ENCODE measurements at regions of chr3 and their contacts with region 1.

Region 1: DNA sequence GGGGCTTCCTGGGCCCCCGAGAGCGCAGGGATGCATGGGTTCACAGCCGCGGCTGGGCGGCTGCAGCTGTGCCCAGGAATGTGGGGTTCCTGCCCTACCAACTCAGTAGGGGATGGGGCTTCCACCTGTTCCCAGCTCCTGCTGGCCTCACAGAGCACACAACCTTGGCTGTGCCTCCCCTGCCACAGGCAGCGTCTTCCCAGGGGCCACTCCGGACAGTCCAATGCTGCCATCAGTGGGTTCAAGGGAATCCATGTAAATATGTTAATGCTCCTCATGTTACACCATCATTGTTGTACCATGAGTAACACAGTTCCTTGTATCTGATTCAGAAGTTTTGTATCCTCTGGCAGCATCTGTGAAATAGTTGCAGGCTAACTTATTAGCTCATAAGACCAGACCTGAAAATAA is 12.1 kb upstream of the SIAH2 start:
- DNase-seq: no peak
- H3K4me3 Mint-ChIP-seq: no peak overlapping the region
- H3K27ac Mint-ChIP-seq: no peak overlapping the region
- H3K4me1 Mint-ChIP-seq: no peaks in the 10 kb centered on the region
- H3K27me3 Mint-ChIP-seq: no peaks in the 10 kb centered on the region

Region 2: DNA sequence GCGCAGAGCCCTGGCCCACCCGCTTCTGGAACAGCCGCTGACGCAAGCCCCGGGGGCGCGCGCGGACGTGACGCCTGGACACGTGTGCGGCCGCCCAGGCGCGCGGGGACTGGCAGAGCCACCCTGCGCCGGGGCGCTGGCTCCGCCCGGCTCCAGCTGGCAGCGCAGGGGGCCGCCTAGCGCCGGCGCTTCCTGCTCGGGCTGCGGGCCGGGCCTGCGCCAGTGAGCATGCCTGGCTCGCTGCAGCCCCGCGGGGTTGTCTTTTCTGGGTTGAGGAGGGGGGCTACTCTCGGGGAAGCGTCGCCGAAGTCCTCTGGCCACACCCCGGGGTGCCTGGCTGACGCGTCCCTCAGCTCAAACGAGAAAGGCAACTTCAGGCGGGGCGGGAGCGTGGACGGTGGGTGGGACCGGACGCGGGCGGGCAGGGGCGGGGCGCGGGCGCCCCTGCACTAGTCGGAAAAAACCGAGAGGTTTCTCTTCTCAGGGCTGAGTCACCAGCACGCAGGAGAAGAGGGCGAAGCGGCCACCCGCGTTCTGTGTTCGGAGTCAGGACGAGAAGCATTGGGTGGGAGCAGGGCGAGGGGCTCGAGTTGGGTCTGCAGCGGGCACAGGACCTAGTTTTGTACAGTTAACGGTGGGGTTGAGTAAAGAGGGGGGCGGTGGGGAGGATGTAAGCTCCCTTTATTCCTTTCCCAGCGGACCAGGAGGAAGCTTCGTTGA is 11.8 kb before region 1 on chr3 and contains the start of gene SIAH2:
- CTCF ChIA-PET with region 1: interaction called, 61 read pairs
- POLR2A ChIA-PET with region 1: no interaction called
- DNase-seq: peak; percentile 93
- H3K4me3 Mint-ChIP-seq: peak within 1 kb of the TSS; percentile 93
- H3K27ac Mint-ChIP-seq: peak within 1 kb of the TSS; percentile 100
- H3K4me1 Mint-ChIP-seq: peaks cover 45% of the 10 kb centered on the region
- H3K27me3 Mint-ChIP-seq: no peaks in the 10 kb centered on the region
- total RNA-seq, gene SIAH2: 30.9 to 40.8 TPM

Region 3: GRCh38 chr3:150787741-150788370 is 12.8 kb after region 1 on chr3:
- CTCF ChIA-PET with region 1: interaction called, 23 read pairs
- POLR2A ChIA-PET with region 1: no interaction called
- DNase-seq: peak; percentile 83
- H3K4me3 Mint-ChIP-seq: no peak overlapping the region
- H3K27ac Mint-ChIP-seq: no peak overlapping the region
- H3K4me1 Mint-ChIP-seq: peaks cover 29% of the 10 kb centered on the region
- H3K27me3 Mint-ChIP-seq: peaks cover 2% of the 10 kb centered on the region

Measured in activated CD4-positive, alpha-beta T cell treated with anti-CD3 and anti-CD28 coated beads, Interleukin-2, amount 10 ng/mL, durations not matched to agents 7 days and 5 days (primary cell).